A549 (cell line): ENCODE measurements at regions of chr3 and their contacts with region 1.

Region 1: GRCh38 chr3:50192689-50193141 is 1.3 kb downstream of the GNAT1 start:
- DNase-seq: peak; percentile 50 to 56
- ATAC-seq: peak; percentile 30 to 66; a peak in 3 of 6 replicates
- H3K4me3 ChIP-seq: no peak overlapping the region
- H3K27ac ChIP-seq: no peak overlapping the region
- H3K4me1 ChIP-seq: peaks cover 13% of the 10 kb centered on the region; the same call in 2 of the 3 replicates
- CTCF ChIP-seq: peak; percentile 72
- EP300 ChIP-seq: no peak
- POLR2A ChIP-seq: no peak
- RAD21 ChIP-seq: peak; percentile 78

Region 2: GRCh38 chr3:50138266-50139200 is 54.2 kb before region 1 on chr3:
- CTCF ChIA-PET with region 1: interaction called, 13 read pairs
- POLR2A ChIA-PET with region 1: no interaction called
- DNase-seq: no peak
- ATAC-seq: no peak
- H3K4me3 ChIP-seq: no peak overlapping the region
- H3K27ac ChIP-seq: no peak overlapping the region
- H3K4me1 ChIP-seq: no peaks in the 10 kb centered on the region
- CTCF ChIP-seq: no peak
- EP300 ChIP-seq: no peak
- POLR2A ChIP-seq: no peak
- RAD21 ChIP-seq: no peak

Region 3: DNA sequence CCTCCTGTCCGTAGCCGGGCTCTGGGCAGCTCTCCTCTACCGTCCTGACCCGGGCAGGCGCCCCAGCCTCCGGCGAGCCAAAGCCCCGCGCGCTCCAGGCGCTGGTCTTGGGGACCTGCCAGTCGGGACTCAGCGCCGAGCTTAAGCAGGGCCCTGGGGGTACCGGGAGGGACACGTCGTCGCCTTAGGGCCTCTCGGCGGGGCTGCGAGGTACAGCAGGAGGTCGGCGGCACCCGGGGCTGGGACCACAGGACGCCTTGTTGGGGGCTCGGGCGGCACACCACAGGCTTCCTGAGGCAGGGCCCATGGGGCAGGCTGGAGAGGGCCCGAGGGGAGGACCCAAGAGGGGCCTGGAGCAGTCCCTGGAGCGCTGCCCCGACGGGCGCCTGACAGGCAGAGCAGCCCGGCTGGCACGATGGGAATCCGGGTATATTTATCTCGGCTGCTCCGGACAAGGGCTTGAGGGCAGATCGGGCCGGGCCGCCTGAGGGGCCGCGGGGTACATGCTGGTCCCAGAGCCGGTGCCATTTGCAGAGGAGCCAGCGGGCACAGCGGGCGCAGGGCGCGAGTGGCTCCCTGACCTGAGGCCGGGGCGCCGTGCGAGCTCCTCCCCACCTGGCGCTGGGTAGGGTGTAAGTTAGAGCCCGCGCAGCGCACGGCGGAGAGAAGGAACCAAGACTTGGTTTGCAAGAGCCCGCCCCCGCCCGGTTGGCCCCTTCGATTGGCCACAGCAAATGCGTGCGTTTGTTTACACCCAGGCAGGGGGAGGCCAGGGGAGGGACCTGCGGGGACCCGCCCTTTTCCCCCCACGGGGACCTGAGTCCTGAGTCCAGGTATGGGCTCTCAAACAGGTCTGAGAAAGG is 12.9 kb after region 1 on chr3:
- CTCF ChIA-PET with region 1: interaction called, 550 read pairs
- POLR2A ChIA-PET with region 1: no interaction called
- DNase-seq: no peak
- ATAC-seq: no peak
- H3K4me3 ChIP-seq: no peak overlapping the region
- H3K27ac ChIP-seq: no peak overlapping the region
- H3K4me1 ChIP-seq: no peaks in the 10 kb centered on the region; the same call in 2 of the 3 replicates
- CTCF ChIP-seq: no peak
- EP300 ChIP-seq: no peak
- POLR2A ChIP-seq: no peak
- RAD21 ChIP-seq: no peak

Region 4: DNA sequence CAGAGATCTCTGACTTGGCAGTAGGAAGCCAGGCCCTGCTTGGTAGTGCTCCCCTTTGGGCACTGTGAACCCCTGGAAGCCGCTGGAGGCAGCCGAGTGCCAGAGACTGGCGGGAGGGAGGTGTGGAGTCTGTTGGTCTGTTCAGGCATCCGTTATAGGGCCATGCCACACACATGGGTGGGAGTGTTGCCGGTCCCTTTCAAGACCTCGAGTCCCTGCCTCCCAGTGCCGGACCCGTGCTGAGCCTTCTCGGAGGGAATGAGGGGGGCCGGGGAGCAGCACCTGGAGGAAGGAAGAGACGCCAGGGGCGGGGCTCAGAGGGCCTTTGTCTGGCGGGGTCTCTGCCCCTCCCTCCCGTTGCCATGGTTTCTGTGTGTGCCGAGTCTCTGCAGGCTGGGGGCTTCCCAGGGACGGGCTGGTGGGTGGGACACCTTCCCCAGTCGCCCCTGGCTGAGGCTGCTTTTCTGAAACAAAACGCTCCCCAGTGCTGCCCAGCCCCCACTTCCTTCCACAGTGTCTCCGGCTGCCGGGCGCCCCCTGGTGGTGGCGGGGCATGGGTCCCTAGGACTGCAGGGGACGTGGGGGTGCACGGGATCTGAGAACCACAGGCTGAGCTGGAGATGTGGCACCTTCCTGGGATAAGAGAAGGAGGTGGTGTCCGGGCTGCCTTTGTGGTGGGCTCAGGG is 53.3 kb after region 1 on chr3:
- CTCF ChIA-PET with region 1: interaction called, 27 read pairs
- POLR2A ChIA-PET with region 1: no interaction called
- DNase-seq: peak; percentile 61 to 78
- ATAC-seq: peak; percentile 86 to 94
- H3K4me3 ChIP-seq: peak overlapping the region; percentile 41
- H3K27ac ChIP-seq: peak overlapping the region; percentile 89 to 95
- H3K4me1 ChIP-seq: peaks cover 35% of the 10 kb centered on the region
- CTCF ChIP-seq: peak; percentile 90
- EP300 ChIP-seq: no peak
- POLR2A ChIP-seq: no peak
- RAD21 ChIP-seq: peak; percentile 59 to 64

Region 5: DNA sequence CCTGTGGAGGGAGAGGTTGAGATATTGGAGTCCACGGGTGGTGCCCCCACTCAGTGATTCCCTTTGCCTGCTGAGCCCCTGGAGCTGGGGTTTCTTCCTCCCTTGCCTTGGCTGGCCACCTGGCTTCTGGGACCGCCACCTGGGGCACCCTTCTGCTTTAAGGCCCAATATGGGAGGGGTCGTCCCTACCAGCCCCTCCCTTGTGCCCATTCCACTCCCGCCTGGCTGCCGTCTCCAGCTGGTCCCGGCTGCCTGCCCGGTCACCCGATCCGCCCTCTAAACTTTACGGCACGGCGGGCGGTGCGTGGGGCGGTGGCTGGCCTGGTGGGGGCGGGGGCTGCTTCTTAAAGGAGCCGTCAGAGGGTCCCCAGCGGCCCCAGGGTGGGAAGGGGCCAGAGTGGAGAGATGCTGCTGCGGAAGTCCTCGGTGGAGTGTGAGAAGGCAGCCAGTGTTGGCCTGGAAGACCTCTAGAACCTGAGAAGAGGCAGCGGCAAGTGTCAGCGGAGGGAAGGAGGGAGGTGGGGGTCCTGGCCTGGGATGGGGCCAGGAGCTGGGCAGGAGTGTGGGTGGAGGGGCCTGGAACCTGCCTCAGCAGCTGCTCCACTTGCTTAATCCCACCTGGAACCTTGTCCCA is 74.7 kb after region 1 on chr3:
- CTCF ChIA-PET with region 1: interaction called, 15 read pairs
- POLR2A ChIA-PET with region 1: no interaction called
- DNase-seq: no peak
- ATAC-seq: no peak
- H3K4me3 ChIP-seq: peak overlapping the region; percentile 14; the same call in 1 of the 3 replicates
- H3K27ac ChIP-seq: peak overlapping the region; percentile 48 to 94; a peak in 5 of 6 replicates
- H3K4me1 ChIP-seq: peaks cover 78% of the 10 kb centered on the region
- CTCF ChIP-seq: no peak
- EP300 ChIP-seq: no peak
- POLR2A ChIP-seq: no peak
- RAD21 ChIP-seq: no peak